ENCODE measurements at regions of chr9 and their contacts with region 1.

Region 1: DNA sequence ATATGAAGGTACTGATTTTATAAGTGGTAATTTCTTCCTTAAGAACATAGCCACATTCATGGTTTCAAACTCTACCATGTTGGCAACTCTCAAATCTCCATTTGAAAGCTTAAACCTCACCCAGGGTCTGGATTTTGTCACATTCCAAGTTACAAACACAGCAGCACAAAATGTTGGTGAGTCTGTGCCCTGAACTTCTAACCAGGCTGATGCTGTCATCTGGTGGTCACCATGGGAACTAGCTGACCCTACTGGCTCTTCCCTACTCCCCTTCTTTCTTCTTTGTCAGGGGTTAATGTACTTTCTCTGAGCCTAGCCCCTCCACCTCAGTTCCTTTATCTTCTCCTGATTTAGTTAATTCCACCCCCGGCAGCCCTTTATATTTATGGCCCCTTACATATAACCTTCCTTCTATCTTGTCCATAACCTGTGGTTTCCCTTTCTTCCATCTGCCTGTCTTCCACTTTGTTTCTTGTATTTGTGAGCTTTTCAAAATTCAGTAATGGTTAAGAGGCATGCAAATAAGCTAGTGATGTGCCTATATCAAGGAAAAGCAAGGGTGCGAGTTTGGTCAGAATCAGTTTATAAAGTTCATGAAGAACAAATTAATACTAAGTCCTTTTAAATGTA is 35.9 kb downstream of the TGFBR1 start:
- DNase-seq: peak in 1 of 2 donors; percentile 41
- ATAC-seq: peak; percentile 76 to 90 (median 82)
- H3K4me3 ChIP-seq: no peak overlapping the region
- H3K27ac ChIP-seq: no peak overlapping the region
- H3K4me1 ChIP-seq: peaks cover 34% of the 10 kb centered on the region
- H3K27me3 ChIP-seq: no peaks in the 10 kb centered on the region
- CTCF ChIP-seq: peak; percentile 89

Region 2: DNA sequence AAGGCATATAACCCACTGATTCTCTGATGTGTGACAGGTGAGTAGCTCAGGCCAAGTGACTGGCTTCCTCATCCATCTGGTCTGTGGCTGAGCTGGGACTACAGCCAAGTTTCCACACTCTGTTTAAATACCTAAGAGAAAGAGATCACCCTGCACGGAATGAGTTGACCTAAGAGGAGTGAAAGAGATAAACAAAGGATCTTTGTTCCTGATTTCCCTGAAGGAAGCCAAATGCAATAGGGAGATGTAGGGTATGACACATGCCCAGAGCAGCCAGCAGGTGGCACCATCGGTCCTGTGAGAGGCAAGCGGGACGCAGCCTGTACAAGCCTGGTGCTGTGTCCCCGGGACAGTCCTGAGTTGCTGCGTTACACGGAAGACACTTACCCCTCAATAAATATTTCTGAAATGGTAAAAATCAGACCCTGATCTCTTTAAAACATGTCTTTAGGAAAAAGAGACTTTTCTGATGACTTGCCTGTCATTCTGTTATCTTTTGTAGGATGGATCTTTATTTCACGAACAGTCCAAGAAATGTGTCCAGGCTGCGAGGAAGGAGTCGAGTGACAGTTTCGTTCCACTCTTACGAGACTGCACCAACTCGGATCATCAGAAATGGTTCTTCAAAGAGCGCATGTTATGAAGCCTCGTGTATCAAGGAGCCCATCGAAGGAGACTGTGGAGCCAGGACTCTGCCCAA is 292.2 kb before region 1 on chr9:
- intact Hi-C with region 1: loop called (anchors 2 to 5 kb)
- DNase-seq: peak; percentile 87 to 95
- ATAC-seq: peak; percentile 99 to 100 (median 99)
- H3K4me3 ChIP-seq: peak overlapping the region; percentile 56
- H3K27ac ChIP-seq: no peak overlapping the region
- H3K4me1 ChIP-seq: peaks cover 4% of the 10 kb centered on the region
- H3K27me3 ChIP-seq: no peaks in the 10 kb centered on the region
- CTCF ChIP-seq: peak; percentile 94

Region 3: DNA sequence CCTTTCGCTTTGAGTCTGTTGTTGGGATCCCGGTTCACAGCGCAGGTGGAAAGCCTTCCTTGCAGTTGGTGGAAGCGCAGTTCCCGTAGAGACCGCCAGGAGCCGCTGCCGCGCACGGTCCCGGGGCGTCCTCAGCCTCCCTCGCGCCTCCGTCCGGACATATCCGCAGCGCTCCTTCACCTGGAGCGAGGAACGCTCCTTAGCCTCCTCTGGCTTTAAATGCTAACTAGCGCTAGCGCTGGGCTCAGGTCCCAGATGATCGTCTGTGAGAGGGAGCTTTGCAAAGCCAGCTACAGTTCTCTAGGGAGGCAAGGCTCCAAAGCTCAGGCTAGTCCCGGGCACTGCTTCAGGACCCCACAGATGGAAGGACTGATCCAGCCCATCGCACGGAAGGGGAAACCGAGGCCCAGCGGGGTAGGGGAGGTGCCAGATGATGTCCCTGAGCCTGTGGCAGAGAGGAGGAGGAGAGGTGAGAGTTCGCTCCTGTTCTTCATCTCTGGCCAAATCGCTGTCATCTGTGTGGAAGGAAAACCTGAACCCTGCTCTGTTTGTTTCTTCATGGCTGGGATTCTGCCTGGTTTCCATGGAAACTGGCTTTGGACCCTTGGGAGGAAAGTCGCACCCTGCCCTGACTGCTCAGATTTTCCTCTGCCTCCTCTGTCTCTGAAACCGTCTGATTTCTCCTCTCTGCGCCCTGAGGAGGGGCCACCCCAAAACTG is 165.6 kb before region 1 on chr9:
- intact Hi-C with region 1: loop called (anchors 1 to 5 kb)
- DNase-seq: peak; percentile 81 to 91
- ATAC-seq: peak; percentile 88 to 89 (median 88)
- H3K4me3 ChIP-seq: peak overlapping the region; percentile 52
- H3K27ac ChIP-seq: peak overlapping the region; percentile 36
- H3K4me1 ChIP-seq: peaks cover 27% of the 10 kb centered on the region
- H3K27me3 ChIP-seq: peaks cover 0 to 13% (median 0%) of the 10 kb centered on the region in 3 donors
- CTCF ChIP-seq: peak; percentile 97

Region 4: DNA sequence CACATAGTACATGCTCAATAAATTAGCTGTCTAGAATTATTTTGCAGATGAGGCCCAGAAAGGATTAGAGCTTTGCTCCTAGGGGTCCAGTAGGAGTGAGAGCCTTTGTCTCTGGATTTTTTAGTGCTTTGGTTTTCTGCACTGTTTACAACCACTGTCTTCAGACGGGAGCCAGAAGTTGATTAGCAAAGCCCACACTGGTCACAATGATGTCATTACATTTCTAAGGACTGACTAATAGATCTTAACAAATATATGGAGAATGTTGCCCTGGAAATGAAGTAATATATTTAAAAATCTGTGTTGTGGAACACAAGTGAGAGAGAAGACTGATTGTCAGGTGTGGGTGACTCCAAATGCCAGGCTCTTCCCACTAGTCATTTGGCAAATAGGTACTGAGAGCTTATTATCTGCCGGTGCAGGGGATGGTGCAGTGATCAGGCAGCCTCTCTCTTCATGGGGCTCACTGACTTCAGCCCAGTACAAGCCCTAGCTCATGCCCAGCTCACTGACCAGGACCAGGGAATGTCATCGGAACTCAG is 120.9 kb before region 1 on chr9:
- intact Hi-C with region 1: no loop called
- DNase-seq: no peak
- ATAC-seq: peak in 3 of 4 donors; percentile 47 to 64 (median 55)
- H3K4me3 ChIP-seq: no peak overlapping the region
- H3K27ac ChIP-seq: peak overlapping the region; percentile 31
- H3K4me1 ChIP-seq: peaks cover 4% of the 10 kb centered on the region
- H3K27me3 ChIP-seq: no peaks in the 10 kb centered on the region
- CTCF ChIP-seq: no peak